AG04449 (cell line): ENCODE measurements at regions of chr14 and their contacts with region 1.

Region 1: DNA sequence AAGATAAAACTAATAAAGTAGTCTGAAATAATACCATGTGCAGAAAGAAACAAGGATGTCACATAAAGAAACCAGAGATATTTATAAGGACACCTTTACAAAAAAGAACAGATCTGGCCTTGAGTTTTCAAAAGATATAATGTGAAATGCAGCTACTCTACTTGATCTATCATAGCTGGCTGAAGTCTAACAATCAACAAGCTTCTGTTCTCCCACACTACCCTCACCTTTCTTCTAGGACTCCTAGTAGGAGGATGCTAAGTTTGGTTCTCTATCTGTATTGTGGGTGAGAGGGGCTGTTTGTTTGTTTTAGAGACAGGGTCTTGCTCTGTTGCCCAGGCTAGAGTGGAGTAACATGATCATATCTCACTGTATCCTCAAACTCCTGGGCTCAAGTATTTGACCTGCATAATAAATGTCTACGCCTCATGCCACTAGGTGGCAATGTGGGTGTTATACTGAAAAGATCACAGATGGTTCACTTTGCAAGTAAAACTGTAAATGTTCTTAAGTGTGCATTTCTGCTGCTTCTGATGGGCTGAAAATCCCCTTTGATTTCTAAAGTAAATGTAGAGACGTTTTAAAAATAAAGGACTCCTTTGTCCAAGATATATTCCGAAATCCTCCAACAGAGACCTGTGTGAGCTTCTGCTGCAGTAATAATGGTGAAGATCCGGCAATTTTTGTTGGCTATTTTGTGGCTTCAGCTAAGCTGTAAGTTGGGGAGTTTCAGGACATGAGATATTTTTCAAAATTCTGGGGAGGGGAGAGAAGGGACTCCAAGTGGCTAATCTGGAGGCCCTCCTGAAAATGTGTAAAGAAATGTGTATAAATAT is 269.3 kb downstream of the DAD1 start:
- DNase-seq: no peak
- H3K4me3 ChIP-seq: no peak overlapping the region
- CTCF ChIP-seq: peak; percentile 57

Region 2: DNA sequence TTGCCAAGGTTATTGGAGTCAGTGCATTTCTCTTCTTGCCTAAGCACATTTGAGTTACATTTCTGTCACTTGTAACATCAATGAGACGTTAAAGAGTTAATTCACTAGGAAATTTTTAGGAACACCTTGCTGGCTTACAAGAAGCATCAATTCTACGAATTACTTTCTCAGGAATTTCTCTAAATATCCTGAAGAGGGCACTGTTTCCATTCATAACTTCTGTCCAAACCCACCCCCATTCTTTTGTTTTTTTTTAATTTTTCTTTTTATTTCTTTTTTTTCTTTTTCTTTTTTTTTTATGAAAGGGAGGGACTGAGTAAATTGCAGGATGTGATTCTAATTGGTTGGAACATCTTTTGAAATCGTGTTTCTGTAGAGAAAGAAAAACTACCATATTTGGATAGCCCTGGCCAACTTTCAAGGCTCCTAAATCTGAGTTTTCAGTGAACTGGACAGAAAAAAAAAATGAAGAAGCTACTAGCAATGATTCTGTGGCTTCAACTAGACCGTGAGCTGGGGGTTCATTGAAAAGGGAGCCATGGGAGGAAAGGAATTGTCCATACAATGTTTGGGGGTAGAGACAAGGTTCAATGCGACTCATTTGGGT is 16.1 kb before region 1 on chr14:
- CTCF ChIA-PET with region 1: interaction called, 34 read pairs
- POLR2A ChIA-PET with region 1: no interaction called
- DNase-seq: no peak
- H3K4me3 ChIP-seq: no peak overlapping the region
- CTCF ChIP-seq: no peak

Region 3: DNA sequence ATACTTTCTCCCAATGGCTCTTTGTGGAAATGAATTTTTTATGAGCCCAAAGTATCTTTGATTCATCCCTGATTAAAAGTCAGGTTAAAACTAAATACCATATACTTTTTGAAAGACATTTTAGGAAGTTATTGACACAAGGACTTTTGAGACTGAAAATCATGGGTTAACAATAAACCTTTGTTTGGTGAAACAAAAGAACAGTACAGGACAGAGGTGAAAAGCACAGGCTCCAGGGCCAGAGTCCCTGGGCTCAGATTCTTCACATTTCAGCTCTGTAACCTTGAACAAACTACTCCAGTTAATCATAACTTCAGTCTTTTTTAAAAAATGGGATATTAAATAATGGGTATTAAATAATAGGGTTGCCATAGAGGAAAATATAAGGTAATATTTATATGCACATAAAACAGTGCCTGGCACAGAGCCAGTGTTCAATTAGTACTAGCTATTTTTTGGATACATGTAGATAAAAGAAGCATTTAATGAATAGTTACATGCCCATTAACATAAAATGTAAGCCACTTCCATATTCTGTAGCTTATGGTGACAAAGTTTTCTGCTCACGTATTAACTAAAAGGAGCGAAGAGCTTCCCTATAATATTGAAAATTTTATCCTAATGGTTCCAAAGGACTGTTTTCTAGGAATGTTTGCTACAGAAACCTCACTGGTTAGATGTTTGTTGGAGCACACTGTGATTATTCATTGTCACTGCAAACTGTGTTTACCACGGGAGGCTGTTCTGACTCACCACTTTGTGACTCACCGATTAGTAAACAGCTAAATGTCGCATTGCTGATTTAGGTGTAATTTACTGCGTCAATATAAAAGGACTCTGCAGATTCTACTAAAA is 13.9 kb after region 1 on chr14:
- CTCF ChIA-PET with region 1: interaction called, 36 read pairs
- POLR2A ChIA-PET with region 1: no interaction called
- DNase-seq: no peak
- H3K4me3 ChIP-seq: no peak overlapping the region
- CTCF ChIP-seq: no peak

Region 4: DNA sequence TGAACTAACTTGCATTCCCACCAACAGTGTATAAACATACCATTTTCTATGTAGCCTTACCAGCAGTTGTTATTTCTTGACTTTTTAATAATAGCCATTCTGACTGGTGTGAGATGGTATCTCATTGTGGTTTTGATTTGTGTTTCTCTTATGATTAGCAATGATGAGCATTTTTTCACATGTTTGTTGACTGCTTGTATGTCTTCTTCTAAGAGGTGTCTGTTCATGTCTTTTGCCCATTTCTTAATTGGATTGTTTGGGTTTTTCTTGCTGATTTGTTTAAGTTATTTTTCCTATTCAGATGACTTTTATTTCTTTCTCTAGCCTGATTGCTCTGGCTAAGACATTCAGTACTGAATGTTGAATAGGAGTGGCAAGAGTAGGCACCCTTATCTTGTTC is 39.0 kb after region 1 on chr14:
- CTCF ChIA-PET with region 1: interaction called, 14 read pairs
- POLR2A ChIA-PET with region 1: no interaction called
- DNase-seq: no peak
- H3K4me3 ChIP-seq: no peak overlapping the region
- CTCF ChIP-seq: no peak

Region 5: GRCh38 chr14:22375321-22375930 is 55.7 kb after region 1 on chr14:
- CTCF ChIA-PET with region 1: interaction called, 96 read pairs
- POLR2A ChIA-PET with region 1: no interaction called
- DNase-seq: no peak
- H3K4me3 ChIP-seq: no peak overlapping the region
- CTCF ChIP-seq: peak; percentile 39

Region 6: GRCh38 chr14:22380571-22381407 is 61.0 kb after region 1 on chr14:
- CTCF ChIA-PET with region 1: interaction called, 96 read pairs
- POLR2A ChIA-PET with region 1: no interaction called
- DNase-seq: no peak
- H3K4me3 ChIP-seq: peak overlapping the region; percentile 26
- CTCF ChIP-seq: no peak

Region 7: DNA sequence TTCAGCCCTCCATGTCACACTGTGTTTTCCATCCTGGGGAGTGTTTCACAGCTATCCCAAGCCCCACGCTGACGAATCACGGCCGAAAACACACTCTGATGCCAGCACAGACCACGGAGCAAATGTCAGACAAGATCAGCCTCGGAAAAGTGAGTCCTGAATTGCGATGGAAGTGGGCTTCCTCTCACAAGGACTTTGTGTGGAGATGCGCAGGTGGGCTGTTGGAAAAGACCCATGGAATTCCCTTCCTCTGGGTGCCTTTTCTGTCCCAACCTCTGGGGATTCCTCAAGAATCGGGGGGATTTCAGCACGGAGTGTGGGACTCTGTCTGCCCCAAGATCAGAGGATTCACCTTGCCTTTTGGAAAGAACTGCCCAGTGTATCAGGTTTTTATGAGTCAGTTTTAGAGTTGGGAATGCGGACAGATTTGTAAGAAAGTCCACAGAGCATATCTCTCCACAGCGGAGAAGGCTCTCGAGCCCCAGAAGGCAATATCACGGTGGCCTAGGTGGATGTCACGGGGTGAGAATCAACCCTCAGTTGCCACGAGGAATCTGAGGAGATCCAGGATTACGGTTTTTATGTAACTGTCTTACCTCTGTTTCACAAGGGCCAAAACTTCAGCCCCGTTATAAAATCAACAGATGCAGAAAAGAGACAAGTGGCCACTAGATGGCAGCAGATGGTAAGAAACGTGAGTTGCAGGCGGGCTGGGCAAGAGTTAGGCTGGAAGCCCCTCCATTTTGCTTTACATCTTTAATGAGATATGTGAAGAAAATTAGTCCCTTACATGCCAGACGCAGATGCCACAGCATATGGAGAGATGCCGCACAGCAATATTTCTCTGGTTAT is 67.4 kb after region 1 on chr14:
- CTCF ChIA-PET with region 1: interaction called, 23 read pairs
- POLR2A ChIA-PET with region 1: no interaction called
- DNase-seq: no peak
- H3K4me3 ChIP-seq: peak overlapping the region; percentile 13
- CTCF ChIP-seq: peak; percentile 68